WTC11 (cell line): ENCODE measurements at regions of chr7 and their contacts with region 1.

Region 1: DNA sequence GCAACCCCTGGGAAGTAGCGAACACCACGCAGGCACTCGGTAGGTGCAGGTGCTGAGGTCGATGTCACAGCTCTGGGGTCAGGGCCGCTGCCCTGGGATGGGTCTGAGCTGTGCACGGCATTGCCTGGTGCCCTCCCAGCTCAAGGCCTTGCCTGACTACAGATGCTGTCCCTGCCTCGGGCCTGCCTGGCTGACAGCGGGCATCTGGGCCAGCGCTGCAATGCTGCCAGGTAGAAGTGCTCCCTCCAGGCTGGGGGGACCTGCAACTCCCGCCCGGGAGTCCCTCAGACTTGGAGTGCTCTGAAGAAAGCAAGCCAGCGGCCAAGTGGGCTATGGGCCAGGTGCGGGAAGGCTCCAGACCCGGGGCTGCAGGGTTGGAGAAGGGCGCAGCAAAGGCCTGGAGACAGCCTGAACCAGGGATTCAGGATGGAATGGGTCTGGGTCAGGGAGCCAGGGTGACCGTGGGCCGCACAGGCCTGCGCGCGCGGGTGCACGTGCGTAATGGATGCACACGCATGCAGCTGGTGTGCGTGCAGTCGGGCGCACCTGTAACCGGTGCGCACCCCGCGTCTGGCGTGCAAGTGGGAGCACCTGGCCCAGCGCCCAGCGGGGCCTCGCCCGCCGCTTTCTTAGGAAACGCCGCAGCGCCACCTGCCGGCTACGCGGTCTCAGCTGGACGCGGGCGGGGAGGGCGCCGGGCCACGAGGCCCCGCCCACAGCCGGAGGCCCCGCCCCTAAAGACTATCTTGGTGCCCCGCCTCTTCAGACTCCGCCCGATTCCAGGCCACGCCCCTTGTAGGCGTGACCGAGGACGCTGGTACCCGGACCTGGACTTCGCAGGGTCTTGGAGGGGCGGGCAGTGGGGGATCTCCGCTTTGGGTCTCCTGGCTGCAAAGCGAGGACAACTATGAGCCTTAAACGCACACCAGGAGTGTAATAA is 46.7 kb downstream of the MICALL2 start:
- DNase-seq: peak; percentile 95
- ATAC-seq: peak; percentile 95
- H3K4me3 Mint-ChIP-seq: peak overlapping the region; percentile 55
- H3K27ac Mint-ChIP-seq: no peak overlapping the region
- H3K4me1 Mint-ChIP-seq: peaks cover 6% of the 10 kb centered on the region; the same call in 1 of the 2 replicates
- H3K27me3 Mint-ChIP-seq: peaks cover 21% of the 10 kb centered on the region
- CTCF ChIP-seq: peak; percentile 85; the same call in 1 of the 2 replicates

Region 2: GRCh38 chr7:1236831-1237701 is 175.5 kb before region 1 on chr7:
- CTCF ChIA-PET with region 1: interaction called, 14 read pairs
- POLR2A ChIA-PET with region 1: no interaction called
- DNase-seq: peak; percentile 23
- ATAC-seq: no peak
- H3K4me3 Mint-ChIP-seq: peak overlapping the region; percentile 43
- H3K27ac Mint-ChIP-seq: no peak overlapping the region
- H3K4me1 Mint-ChIP-seq: peaks cover 40% of the 10 kb centered on the region
- H3K27me3 Mint-ChIP-seq: peaks cover 87% of the 10 kb centered on the region
- CTCF ChIP-seq: no peak

Region 3: GRCh38 chr7:1512781-1513656 is 100.4 kb after region 1 on chr7:
- CTCF ChIA-PET with region 1: no interaction called
- POLR2A ChIA-PET with region 1: no interaction called
- DNase-seq: no peak
- ATAC-seq: no peak
- H3K4me3 Mint-ChIP-seq: no peak overlapping the region
- H3K27ac Mint-ChIP-seq: no peak overlapping the region
- H3K4me1 Mint-ChIP-seq: no peaks in the 10 kb centered on the region
- H3K27me3 Mint-ChIP-seq: no peaks in the 10 kb centered on the region
- CTCF ChIP-seq: no peak

Region 4: DNA sequence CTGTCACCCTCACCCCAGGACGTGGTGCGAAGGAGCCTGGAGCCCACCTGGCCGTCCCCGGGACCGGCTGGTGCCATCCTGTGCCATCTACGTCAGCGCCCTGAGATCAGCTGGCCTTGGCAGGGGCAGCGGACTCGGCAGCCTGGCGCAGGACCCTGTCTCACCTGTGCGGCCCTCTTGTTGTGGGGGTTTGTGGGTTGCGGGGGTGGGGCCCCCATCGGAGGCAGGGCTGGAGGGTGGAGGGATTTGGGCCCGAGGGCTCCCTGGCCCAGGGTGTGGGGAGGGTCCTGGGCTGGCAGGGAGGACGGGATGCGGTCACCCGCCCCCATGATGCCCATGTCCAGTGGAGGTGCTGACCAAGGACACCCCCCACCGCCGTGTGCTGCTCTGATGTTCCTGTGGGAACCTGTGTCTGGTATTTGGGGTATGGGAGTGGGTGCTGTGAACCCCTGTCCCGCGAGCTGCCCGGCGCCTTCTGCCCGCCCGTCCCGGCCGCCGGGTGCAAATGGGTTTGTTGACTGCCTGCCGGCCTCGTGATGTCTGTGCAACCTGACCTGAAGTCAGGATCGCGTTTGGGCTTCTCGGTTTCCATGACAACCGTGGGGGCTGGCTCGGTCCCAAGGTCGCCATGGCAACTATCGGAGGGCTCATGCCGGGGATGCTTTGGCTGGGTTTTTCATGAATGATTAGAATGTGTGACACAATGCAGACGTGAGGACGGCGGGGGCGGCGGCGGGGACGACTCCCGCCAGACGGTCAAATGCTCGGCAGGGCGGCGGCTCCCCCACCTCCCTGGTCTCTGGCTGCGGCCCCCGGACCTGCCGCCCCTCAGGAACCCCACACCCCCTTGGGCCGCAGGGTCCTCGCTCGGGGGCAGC is 125.2 kb after region 1 on chr7:
- CTCF ChIA-PET with region 1: no interaction called
- POLR2A ChIA-PET with region 1: no interaction called
- DNase-seq: peak; percentile 61
- ATAC-seq: no peak
- H3K4me3 Mint-ChIP-seq: no peak overlapping the region
- H3K27ac Mint-ChIP-seq: peak overlapping the region; percentile 87
- H3K4me1 Mint-ChIP-seq: peaks cover 20% of the 10 kb centered on the region
- H3K27me3 Mint-ChIP-seq: no peaks in the 10 kb centered on the region
- CTCF ChIP-seq: no peak